Activated CD4-positive, alpha-beta T cell treated with anti-CD3 and anti-CD28 coated beads, Interleukin-2, amount 10 ng/mL, durations not matched to agents 7 days and 5 days (primary cell): ENCODE measurements at regions of chr2 and their contacts with region 1.

Region 1: DNA sequence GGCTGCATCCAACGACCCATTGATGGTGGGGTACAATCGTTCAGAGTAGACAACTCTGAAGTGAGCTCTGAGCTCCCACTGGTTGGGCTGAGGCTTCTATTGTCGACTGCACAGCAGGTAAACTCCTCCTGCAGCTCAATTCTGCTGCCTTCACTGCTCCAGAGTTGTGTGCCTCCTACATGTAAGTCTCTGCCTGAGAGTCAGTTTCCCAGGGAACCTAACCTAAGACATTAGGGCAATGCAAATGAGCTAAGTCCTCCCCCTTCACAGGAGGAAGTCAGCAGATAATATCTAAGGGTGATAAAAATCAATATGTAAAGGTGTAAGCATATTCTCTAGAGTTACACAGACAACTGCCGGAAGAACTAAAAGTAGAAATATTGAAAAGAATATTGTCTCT is 22.5 kb upstream of the ACYP2 start:
- DNase-seq: no peak
- H3K4me3 Mint-ChIP-seq: no peak overlapping the region
- H3K27ac Mint-ChIP-seq: peak overlapping the region; percentile 37
- H3K4me1 Mint-ChIP-seq: peaks cover 21% of the 10 kb centered on the region
- H3K27me3 Mint-ChIP-seq: no peaks in the 10 kb centered on the region

Region 2: DNA sequence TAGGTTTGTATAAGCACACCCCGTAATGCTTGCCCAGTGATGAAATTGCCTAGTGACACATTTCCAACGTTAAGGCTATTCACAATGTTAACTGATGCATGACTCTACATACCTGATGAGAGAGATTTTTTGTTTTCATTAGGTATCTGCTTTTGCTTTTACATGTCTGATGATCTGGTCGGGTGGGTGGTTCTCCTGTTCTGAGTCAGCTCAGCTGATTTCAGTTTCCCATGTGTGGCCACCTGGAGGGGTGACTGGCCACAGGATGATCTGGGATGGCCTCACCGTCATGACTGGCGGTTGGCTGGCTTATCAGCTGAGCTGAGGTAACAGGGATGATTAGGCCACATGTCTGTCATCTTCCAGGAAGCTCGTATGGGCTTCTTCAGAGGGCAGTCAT is 11.4 kb before region 1 on chr2:
- CTCF ChIA-PET with region 1: no interaction called
- POLR2A ChIA-PET with region 1: no interaction called
- DNase-seq: peak; percentile 27
- H3K4me3 Mint-ChIP-seq: no peak overlapping the region
- H3K27ac Mint-ChIP-seq: no peak overlapping the region
- H3K4me1 Mint-ChIP-seq: peaks cover 9% of the 10 kb centered on the region
- H3K27me3 Mint-ChIP-seq: no peaks in the 10 kb centered on the region

Region 3: GRCh38 chr2:54106631-54107454 is 13.9 kb after region 1 on chr2:
- CTCF ChIA-PET with region 1: interaction called, 11 read pairs
- POLR2A ChIA-PET with region 1: no interaction called
- DNase-seq: peak; percentile 65
- H3K4me3 Mint-ChIP-seq: no peak overlapping the region
- H3K27ac Mint-ChIP-seq: peak overlapping the region; percentile 2
- H3K4me1 Mint-ChIP-seq: peaks cover 10% of the 10 kb centered on the region
- H3K27me3 Mint-ChIP-seq: peaks cover 5% of the 10 kb centered on the region

Region 4: DNA sequence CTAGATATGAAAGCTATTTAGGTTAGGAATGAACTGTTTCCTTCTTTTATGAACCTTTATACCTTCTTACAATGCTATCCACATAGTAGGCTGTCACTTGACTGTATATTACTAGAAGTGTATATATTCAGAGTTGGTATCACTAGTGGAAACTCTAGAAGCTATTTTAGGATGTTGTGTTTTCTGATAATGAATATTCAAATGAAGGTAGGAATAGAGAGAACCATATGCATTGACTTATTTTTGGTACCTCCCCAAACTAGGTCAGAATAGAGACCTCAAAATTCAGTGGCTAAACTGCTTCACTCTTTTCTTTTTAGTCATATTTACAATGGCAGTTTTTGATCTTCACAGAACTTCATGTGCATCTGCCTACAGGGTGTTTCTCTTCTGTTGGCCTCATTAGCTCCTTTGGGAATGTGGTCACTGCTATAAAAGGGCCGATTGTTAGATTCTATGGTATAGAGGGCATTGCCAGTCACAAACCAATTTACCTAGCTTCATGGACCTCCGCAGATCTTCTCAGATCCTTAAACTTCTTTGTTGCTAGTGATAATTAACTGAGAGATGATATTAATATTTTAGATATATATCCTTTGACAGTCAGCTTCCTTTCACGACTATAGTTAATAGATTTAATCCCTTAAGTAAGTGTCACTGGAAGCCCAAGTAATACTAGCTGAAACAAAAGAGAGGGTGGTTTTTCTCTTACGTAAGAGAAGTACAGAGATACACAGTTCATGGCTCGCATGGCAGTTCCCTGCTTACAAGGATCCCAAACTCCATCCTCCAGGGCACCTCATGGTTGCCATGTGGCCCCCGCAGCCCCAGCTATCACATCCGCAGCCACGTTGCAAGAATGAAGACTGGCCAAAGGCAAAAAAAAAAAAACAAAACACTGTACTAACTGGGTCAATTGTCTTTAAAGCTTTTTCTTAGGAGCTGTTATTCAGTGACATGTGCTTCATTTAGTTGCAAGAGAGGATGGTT is 102.1 kb after region 1 on chr2:
- CTCF ChIA-PET with region 1: no interaction called
- POLR2A ChIA-PET with region 1: no interaction called
- DNase-seq: no peak
- H3K4me3 Mint-ChIP-seq: no peak overlapping the region
- H3K27ac Mint-ChIP-seq: no peak overlapping the region
- H3K4me1 Mint-ChIP-seq: no peaks in the 10 kb centered on the region
- H3K27me3 Mint-ChIP-seq: no peaks in the 10 kb centered on the region